ENCODE measurements at regions of chr10 and their contacts with region 1.

Region 1: GRCh38 chr10:102225646-102226541 is at the start of gene ELOVL3:
- DNase-seq: peak; percentile 69
- ATAC-seq: peak; percentile 94
- H3K4me3 Mint-ChIP-seq: peak within 1 kb of the TSS; percentile 71
- H3K27ac Mint-ChIP-seq: no peak within 1 kb of the TSS
- H3K4me1 Mint-ChIP-seq: peaks cover 19% of the 10 kb centered on the region
- H3K27me3 Mint-ChIP-seq: peaks cover 59% of the 10 kb centered on the region
- CTCF ChIP-seq: no peak
- total RNA-seq, gene ELOVL3: not detected in 2 replicates

Region 2: DNA sequence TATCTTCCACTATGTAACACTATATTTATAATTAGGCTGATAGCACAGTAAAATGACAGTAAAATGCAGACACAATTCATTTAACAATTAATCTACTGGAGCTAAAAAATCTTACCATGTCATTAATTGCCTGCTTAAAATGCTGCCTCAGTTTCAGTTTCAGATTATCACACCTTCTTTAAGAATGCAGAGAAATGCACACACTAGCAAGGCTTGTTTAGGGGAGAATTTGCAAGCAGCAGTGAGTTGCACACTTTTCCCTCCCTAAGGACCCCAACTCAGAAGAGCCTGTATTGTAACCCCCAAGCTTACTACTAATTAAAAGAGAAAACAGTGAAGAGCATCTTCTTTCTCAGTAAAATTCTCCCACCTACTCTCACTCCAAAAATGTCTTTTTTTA is 302.6 kb before region 1 on chr10:
- CTCF ChIA-PET with region 1: no interaction called
- POLR2A ChIA-PET with region 1: no interaction called
- intact Hi-C with region 1: no loop called
- DNase-seq: no peak
- ATAC-seq: no peak
- H3K4me3 Mint-ChIP-seq: peak overlapping the region; percentile 45
- H3K27ac Mint-ChIP-seq: peak overlapping the region; percentile 24
- H3K4me1 Mint-ChIP-seq: peaks cover 30% of the 10 kb centered on the region
- H3K27me3 Mint-ChIP-seq: no peaks in the 10 kb centered on the region
- CTCF ChIP-seq: no peak

Region 3: DNA sequence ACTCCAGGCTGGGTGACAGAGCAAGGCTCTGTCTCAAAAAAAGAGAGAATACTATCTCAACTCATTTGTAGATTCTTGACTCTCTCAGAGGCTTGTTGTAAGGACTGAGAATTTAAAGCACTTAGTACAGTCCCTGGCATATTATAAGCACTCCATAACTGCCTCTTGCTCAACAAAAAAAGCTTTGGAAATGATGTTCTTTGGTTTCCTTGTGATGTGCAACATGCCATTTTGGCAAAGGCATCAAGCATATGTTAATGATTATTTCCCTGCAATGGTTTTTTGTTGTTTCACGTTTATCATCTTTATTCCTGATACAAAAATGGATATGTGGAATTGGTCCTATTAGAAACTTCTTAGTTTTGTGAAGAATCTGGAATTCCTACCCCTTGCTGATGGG is 58.0 kb before region 1 on chr10:
- CTCF ChIA-PET with region 1: interaction called, 7 read pairs
- POLR2A ChIA-PET with region 1: interaction called, 6 read pairs
- intact Hi-C with region 1: loop called (anchors 5 kb)
- DNase-seq: no peak
- ATAC-seq: no peak
- H3K4me3 Mint-ChIP-seq: no peak overlapping the region
- H3K27ac Mint-ChIP-seq: no peak overlapping the region
- H3K4me1 Mint-ChIP-seq: peaks cover 5% of the 10 kb centered on the region
- H3K27me3 Mint-ChIP-seq: no peaks in the 10 kb centered on the region
- CTCF ChIP-seq: no peak

Region 4: GRCh38 chr10:102196893-102197292 is 29.0 kb before region 1 on chr10:
- CTCF ChIA-PET with region 1: no interaction called
- POLR2A ChIA-PET with region 1: no interaction called
- intact Hi-C with region 1: no loop called
- DNase-seq: no peak
- ATAC-seq: no peak
- H3K4me3 Mint-ChIP-seq: no peak overlapping the region
- H3K27ac Mint-ChIP-seq: no peak overlapping the region
- H3K4me1 Mint-ChIP-seq: peaks cover 3% of the 10 kb centered on the region
- H3K27me3 Mint-ChIP-seq: peaks cover 3% of the 10 kb centered on the region
- CTCF ChIP-seq: no peak

Region 5: GRCh38 chr10:102280397-102281101 is 54.7 kb after region 1 on chr10:
- CTCF ChIA-PET with region 1: no interaction called
- POLR2A ChIA-PET with region 1: no interaction called
- intact Hi-C with region 1: no loop called
- DNase-seq: no peak
- ATAC-seq: no peak
- H3K4me3 Mint-ChIP-seq: peak overlapping the region; percentile 55
- H3K27ac Mint-ChIP-seq: peak overlapping the region; percentile 57
- H3K4me1 Mint-ChIP-seq: peaks cover 32% of the 10 kb centered on the region
- H3K27me3 Mint-ChIP-seq: no peaks in the 10 kb centered on the region
- CTCF ChIP-seq: no peak

Region 6: DNA sequence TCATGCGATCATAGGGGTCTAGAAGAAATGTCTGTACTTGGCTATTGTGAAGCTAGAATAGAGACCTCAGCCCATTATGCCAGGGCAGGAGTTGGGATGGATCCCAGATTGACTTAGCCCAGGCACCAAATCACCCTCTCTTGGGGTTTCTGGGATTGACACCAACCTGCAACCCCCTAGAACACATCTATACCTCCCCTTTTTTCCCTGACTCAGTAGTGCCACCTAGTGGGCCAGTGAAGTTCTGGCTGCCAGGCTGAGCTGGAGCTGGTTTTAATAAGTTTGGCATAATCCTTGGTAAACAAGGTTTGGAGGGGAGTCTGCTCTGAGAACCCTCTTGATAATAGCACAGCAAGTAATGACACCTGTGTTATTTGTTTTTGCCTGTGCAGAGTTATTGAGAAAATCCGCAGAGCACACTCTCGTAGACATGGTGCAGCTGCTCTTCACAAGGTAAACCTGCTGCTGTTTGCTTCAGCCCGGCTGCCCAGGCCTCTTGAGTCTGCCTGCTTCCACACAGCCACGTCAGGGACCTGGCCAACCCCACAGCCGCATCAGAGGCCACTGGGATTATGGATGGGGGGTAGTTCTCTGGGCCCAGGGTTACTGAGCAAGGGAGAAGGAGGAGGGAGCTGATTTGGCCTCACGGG is 126.3 kb after region 1 on chr10:
- CTCF ChIA-PET with region 1: interaction called, 232 read pairs
- POLR2A ChIA-PET with region 1: interaction called, 14 read pairs
- intact Hi-C with region 1: loop called (anchors 1 kb)
- DNase-seq: peak; percentile 45
- ATAC-seq: peak; percentile 70
- H3K4me3 Mint-ChIP-seq: no peak overlapping the region
- H3K27ac Mint-ChIP-seq: no peak overlapping the region
- H3K4me1 Mint-ChIP-seq: no peaks in the 10 kb centered on the region
- H3K27me3 Mint-ChIP-seq: no peaks in the 10 kb centered on the region
- CTCF ChIP-seq: peak; percentile 81

Region 7: DNA sequence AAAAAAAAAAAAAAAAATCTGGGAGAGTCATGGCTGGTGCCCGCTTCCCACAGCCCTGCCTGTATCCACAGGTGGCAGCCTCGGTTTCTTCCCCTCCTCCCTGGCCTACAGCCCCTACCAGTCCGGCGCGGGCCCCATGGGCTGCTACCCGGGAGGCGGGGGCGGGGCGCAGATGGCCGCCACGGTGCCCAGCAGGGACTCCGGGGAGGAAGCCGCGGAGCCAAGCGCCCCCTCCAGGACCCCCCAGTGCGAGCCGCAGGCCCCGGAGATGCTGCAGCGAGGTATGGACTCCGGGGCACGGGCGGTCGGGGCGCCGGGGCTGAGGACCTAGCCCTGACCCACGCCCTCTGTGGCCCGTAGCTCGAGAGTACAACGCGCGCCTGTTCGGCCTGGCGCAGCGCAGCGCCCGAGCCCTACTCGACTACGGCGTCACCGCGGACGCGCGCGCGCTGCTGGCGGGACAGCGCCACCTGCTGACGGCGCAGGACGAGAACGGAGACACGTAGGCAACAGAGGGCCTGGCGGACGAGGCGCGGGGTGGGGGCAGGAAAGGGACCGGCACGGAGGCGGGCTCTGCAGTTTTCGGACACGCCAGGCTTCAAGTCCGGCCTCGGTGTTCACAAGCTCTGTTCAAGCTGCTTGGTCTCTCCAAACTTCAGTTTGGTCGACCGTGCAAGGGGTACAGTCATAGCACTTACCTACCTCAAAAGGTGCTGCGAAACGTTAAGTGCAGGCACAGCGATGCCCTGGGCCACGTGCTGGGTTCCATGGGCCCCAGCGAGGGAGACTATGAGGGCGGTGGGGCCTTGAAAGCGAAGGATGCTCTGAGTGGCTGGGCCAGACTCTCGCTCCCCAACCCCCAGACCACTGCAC is 173.6 kb after region 1 on chr10:
- CTCF ChIA-PET with region 1: interaction called, 12 read pairs
- POLR2A ChIA-PET with region 1: interaction called, 33 read pairs
- intact Hi-C with region 1: loop called (anchors 1 kb)
- DNase-seq: peak; percentile 87
- ATAC-seq: peak; percentile 37
- H3K4me3 Mint-ChIP-seq: peak overlapping the region; percentile 94
- H3K27ac Mint-ChIP-seq: peak overlapping the region; percentile 97
- H3K4me1 Mint-ChIP-seq: peaks cover 54% of the 10 kb centered on the region
- H3K27me3 Mint-ChIP-seq: no peaks in the 10 kb centered on the region
- CTCF ChIP-seq: peak; percentile 95

Region 8: GRCh38 chr10:102450194-102450938 is 224.5 kb after region 1 on chr10:
- CTCF ChIA-PET with region 1: interaction called, 10 read pairs
- POLR2A ChIA-PET with region 1: no interaction called
- intact Hi-C with region 1: no loop called
- DNase-seq: peak; percentile 84
- ATAC-seq: peak; percentile 82
- H3K4me3 Mint-ChIP-seq: peak overlapping the region; percentile 92
- H3K27ac Mint-ChIP-seq: peak overlapping the region; percentile 94
- H3K4me1 Mint-ChIP-seq: peaks cover 24% of the 10 kb centered on the region
- H3K27me3 Mint-ChIP-seq: no peaks in the 10 kb centered on the region
- CTCF ChIP-seq: no peak

Region 9: GRCh38 chr10:102596506-102596971 is 370.6 kb after region 1 on chr10:
- CTCF ChIA-PET with region 1: interaction called, 14 read pairs
- POLR2A ChIA-PET with region 1: no interaction called
- intact Hi-C with region 1: loop called (anchors 1 kb)
- DNase-seq: no peak
- ATAC-seq: peak; percentile 61
- H3K4me3 Mint-ChIP-seq: no peak overlapping the region
- H3K27ac Mint-ChIP-seq: no peak overlapping the region
- H3K4me1 Mint-ChIP-seq: no peaks in the 10 kb centered on the region
- H3K27me3 Mint-ChIP-seq: no peaks in the 10 kb centered on the region
- CTCF ChIP-seq: no peak

Region 10: DNA sequence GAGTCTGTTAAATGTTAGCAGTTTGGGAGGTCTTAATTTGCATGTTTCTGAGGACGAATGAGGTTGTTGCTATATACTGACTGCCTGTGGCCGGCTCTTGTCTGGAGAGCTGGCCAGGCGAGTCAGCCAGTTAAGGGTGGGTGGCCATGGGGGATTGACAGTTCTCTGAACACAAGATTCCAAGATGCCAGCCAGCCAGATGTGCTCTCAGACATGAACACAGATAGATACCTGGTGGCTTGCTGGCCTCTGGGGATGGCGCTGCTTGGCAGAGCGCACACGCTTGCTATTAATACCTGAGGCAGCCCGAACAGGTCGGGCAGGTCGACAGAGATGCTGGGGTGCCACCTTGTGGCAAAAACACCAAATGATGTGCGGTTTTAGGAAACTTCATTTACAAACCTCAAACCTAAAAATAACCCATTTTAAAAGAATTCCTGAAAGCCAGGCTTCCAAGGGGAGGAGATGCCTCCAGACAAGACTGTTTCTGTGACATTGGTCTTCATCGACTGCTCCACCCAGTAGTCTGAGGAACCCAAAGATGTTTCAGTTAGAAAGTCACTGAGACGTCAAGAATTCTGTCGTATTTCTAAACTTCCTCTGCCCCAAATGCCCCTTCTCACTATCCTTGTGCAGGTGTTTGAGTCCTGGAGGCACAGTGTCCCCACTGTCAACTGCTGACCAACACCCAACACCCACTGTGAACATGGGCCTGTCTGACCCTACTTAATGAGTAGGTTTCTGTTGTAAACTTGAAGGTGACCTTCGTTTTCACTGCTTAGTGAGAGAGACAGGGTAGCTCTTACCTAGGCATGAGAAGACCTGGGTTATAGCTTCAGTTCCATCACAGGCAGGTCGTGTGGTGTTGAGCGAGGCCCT is 843.8 kb after region 1 on chr10:
- CTCF ChIA-PET with region 1: no interaction called
- POLR2A ChIA-PET with region 1: no interaction called
- intact Hi-C with region 1: no loop called
- DNase-seq: peak; percentile 40
- ATAC-seq: peak; percentile 82
- H3K4me3 Mint-ChIP-seq: peak overlapping the region; percentile 55
- H3K27ac Mint-ChIP-seq: peak overlapping the region; percentile 73
- H3K4me1 Mint-ChIP-seq: peaks cover 33% of the 10 kb centered on the region
- H3K27me3 Mint-ChIP-seq: no peaks in the 10 kb centered on the region
- CTCF ChIP-seq: no peak